IMR-90 (cell line): ENCODE measurements at regions of chr11 and their contacts with region 1.

Region 1: GRCh38 chr11:27392278-27393114 is 29.5 kb upstream of the CCDC34 start:
- DNase-seq: peak; percentile 90
- ATAC-seq: peak; percentile 82
- H3K4me3 ChIP-seq: no peak overlapping the region
- H3K27ac ChIP-seq: peak overlapping the region; percentile 32; the same call in 1 of the 2 replicates
- H3K4me1 ChIP-seq: peaks cover 19% of the 10 kb centered on the region
- H3K27me3 ChIP-seq: no peaks in the 10 kb centered on the region
- CTCF ChIP-seq: no peak
- POLR2A ChIP-seq: no peak
- RAD21 ChIP-seq: no peak

Region 2: DNA sequence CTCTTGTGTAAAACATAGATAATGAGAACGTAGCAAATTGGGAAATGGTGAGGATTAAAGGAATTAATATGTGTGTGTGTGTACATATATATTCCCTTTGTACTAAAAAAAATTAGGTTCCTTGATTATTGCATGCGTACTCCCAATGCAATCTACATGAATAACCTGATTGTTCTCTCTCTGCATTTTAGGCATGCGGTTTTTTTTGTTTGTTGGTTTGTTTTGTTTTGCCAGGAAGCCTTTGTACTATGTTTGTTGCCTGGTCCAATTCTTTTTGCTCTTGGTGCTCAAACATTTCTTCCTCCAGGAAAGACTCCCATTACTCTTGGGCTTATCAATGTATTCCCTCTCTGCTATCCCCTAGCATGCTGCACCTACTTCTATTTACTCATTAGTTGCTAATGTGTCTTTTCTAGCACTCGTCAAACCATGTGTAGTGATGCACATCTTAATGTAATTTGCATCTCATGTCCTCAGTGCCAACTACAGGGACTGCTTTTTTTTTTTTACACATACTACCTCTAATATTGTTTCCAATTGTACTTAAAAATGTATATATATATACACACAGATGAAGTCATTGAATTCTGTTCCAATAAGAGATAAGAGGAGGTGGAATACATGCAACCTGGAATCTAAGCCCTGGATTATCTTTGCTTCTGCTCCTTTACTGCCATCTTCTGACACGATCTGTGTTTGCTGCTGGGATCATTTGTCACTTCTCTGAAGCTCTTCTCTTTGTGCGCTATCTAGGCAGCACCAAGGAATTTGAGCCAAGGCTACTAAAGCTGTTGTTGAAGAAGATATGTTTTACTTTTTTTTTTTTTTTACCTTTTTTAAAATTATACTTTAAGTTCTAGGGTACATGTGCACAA is 1257.8 kb before region 1 on chr11:
- CTCF ChIA-PET with region 1: no interaction called
- POLR2A ChIA-PET with region 1: no interaction called
- dilution Hi-C with region 1: no loop called
- in situ Hi-C with region 1: no loop called
- intact Hi-C with region 1: no loop called
- DNase-seq: peak; percentile 38
- ATAC-seq: peak; percentile 89
- H3K4me3 ChIP-seq: no peak overlapping the region
- H3K27ac ChIP-seq: no peak overlapping the region
- H3K4me1 ChIP-seq: no peaks in the 10 kb centered on the region
- H3K27me3 ChIP-seq: no peaks in the 10 kb centered on the region
- CTCF ChIP-seq: no peak; the same call in 1 of the 2 replicates
- POLR2A ChIP-seq: no peak
- RAD21 ChIP-seq: peak; percentile 38

Region 3: GRCh38 chr11:26974069-26974783 is 418.3 kb before region 1 on chr11:
- CTCF ChIA-PET with region 1: no interaction called
- POLR2A ChIA-PET with region 1: no interaction called
- dilution Hi-C with region 1: no loop called
- in situ Hi-C with region 1: no loop called
- intact Hi-C with region 1: loop called (anchors 10 kb)
- DNase-seq: peak; percentile 69
- ATAC-seq: peak; percentile 76
- H3K4me3 ChIP-seq: no peak overlapping the region
- H3K27ac ChIP-seq: peak overlapping the region; percentile 56; the same call in 1 of the 2 replicates
- H3K4me1 ChIP-seq: peaks cover 2% of the 10 kb centered on the region
- H3K27me3 ChIP-seq: no peaks in the 10 kb centered on the region
- CTCF ChIP-seq: no peak
- POLR2A ChIP-seq: no peak
- RAD21 ChIP-seq: no peak

Region 4: GRCh38 chr11:27437829-27438594 is 45.5 kb after region 1 on chr11:
- CTCF ChIA-PET with region 1: no interaction called
- POLR2A ChIA-PET with region 1: no interaction called
- dilution Hi-C with region 1: no loop called
- in situ Hi-C with region 1: no loop called
- intact Hi-C with region 1: loop called (anchors 5 kb)
- DNase-seq: no peak
- ATAC-seq: no peak
- H3K4me3 ChIP-seq: no peak overlapping the region
- H3K27ac ChIP-seq: no peak overlapping the region
- H3K4me1 ChIP-seq: peaks cover 7% of the 10 kb centered on the region
- H3K27me3 ChIP-seq: no peaks in the 10 kb centered on the region
- CTCF ChIP-seq: no peak
- POLR2A ChIP-seq: no peak
- RAD21 ChIP-seq: no peak

Region 5: GRCh38 chr11:27642954-27643353 is 250.5 kb after region 1 on chr11:
- CTCF ChIA-PET with region 1: no interaction called
- POLR2A ChIA-PET with region 1: no interaction called
- dilution Hi-C with region 1: no loop called
- in situ Hi-C with region 1: no loop called
- intact Hi-C with region 1: no loop called
- DNase-seq: no peak
- ATAC-seq: no peak
- H3K4me3 ChIP-seq: no peak overlapping the region
- H3K27ac ChIP-seq: no peak overlapping the region
- H3K4me1 ChIP-seq: no peaks in the 10 kb centered on the region
- H3K27me3 ChIP-seq: no peaks in the 10 kb centered on the region
- CTCF ChIP-seq: peak; percentile 23; the same call in 1 of the 2 replicates
- POLR2A ChIP-seq: no peak
- RAD21 ChIP-seq: no peak